ENCODE measurements at regions of chr22 and their contacts with region 1.

Region 1: DNA sequence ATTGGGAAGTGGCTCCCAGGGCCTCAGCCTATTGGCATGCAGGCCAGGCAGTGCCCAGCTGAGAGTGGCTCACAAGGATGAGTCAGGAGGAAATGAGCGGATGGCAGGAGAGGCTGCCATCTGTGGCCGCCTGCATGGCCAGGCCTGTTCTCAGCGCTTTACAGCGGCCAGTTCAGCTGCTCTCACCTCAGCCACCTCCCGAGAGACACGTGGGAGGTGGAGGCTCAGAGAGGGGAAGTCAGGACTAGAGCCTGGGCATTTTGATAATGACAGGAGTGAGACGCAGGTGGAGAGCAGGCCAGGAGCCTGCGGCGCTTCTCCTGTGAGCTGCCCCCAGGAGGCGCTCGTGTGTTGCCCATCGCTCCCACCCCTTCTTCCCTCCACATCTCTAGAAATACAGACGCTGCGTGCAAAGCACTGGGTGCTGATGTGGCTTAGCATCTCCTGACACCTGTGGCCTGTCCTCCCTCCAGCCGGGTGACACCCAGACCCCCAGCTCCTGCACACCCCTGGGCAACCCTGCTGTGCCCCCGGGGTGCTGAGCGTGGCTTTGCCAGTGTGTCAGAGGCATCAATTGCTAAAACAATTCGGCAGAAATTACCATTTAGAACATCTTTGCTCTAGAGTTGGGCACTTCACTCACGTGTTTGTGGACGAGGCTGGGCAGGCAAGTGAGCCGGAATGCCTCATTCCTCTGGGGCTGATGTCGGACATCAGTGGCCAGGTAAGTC is 21.4 kb upstream of the PANX2 start:
- DNase-seq: peak; percentile 43 to 75
- ATAC-seq: peak; percentile 89

Region 2: GRCh38 chr22:50209893-50210292 is 60.7 kb after region 1 on chr22:
- intact Hi-C with region 1: loop called (anchors 5 kb)
- DNase-seq: peak in 1 of 2 donors; percentile 81
- ATAC-seq: peak; percentile 70

Region 3: GRCh38 chr22:50260801-50261614 is 111.9 kb after region 1 on chr22:
- intact Hi-C with region 1: no loop called
- DNase-seq: no peak
- ATAC-seq: peak; percentile 21

Region 4: GRCh38 chr22:50292643-50293440 is 143.7 kb after region 1 on chr22:
- intact Hi-C with region 1: no loop called
- DNase-seq: no peak
- ATAC-seq: peak; percentile 23